ENCODE measurements at regions of chr6 and their contacts with region 1.

Region 1: GRCh38 chr6:72683797-72684196 is 61.9 kb downstream of the KCNQ5 start:
- DNase-seq: no peak
- H3K4me3 Mint-ChIP-seq: no peak overlapping the region
- H3K27ac Mint-ChIP-seq: peak overlapping the region; percentile 14
- H3K4me1 Mint-ChIP-seq: peaks cover 8% of the 10 kb centered on the region
- H3K27me3 Mint-ChIP-seq: no peaks in the 10 kb centered on the region

Region 2: DNA sequence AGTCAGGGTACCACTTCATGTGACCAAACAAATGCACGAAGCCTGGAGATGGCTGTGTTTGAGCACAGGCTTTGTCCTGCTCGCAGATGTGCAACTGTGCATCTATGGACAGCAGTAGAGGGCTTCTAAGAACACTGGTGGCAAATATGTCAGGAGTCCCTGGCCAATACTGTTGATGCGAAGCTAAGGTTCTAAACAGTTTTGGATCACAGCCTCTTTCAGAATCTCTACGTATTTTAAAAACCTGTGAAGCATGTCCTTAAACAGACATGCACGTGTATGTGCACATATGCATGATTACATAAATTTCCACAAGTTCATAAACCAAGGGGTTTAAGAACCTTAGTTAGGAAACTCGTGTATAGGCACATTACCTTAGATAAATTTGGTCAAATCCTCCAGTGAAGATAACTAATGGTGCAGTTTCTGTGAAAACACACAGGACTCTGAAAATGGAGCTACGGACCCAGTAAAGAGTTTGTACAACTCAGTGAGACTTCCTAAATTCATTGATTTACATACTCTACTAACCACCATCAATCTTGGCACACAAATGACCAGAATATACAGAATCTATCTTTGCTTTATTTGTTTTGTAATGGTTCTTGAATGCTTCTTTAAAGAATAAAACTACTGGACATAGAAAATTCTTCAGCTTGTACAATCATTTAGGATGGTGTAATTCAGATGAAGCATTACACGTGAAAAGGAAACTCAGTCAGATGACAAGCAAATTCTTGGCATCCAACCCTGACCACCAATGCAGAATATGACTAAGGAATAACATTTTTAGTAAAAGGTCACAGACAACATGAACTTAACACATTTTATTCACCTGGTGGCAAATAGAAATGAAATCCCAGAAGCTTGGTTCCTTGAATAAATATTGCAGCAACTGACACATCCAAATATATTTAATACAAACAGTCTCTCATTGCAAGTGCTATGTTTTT is 34.5 kb before region 1 on chr6:
- intact Hi-C with region 1: loop called (anchors 1 kb)
- DNase-seq: no peak
- H3K4me3 Mint-ChIP-seq: no peak overlapping the region
- H3K27ac Mint-ChIP-seq: no peak overlapping the region
- H3K4me1 Mint-ChIP-seq: peaks cover 36% of the 10 kb centered on the region
- H3K27me3 Mint-ChIP-seq: no peaks in the 10 kb centered on the region

Region 3: DNA sequence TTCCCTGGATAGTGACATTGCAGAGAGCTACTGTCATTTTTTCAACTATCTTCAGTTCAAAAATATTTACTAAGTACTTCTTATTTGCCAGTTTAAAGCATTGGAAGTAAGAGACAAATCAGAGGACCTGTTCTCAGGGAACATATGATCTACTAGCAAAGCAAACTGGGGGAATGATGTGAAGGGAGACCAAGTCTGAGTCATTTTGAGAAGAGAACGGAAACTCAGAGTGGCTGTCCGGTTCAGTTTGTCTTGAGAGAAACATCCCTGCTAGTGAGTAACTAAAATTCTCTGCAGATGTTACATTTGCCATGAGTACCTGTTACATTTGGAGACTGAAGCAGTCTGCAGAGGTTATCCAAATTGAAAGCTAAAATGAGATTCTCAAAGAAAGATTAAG is 56.3 kb after region 1 on chr6:
- intact Hi-C with region 1: loop called (anchors 2 kb)
- DNase-seq: no peak
- H3K4me3 Mint-ChIP-seq: no peak overlapping the region
- H3K27ac Mint-ChIP-seq: no peak overlapping the region
- H3K4me1 Mint-ChIP-seq: peaks cover 36% of the 10 kb centered on the region
- H3K27me3 Mint-ChIP-seq: peaks cover 2% of the 10 kb centered on the region

Measured in activated T-helper 1 cell treated with anti-CD3 and anti-CD28 coated beads, Interleukin-12 subunit alpha, Interleukin-12 subunit beta, Interleukin-2, Interleukin-4 antibody, amounts not matched to agents 30 ng/mL and 10 ng/mL and 1 ng/mL, durations not matched to agents 14 hours and 24 hours and 36 hours (primary cell).